ENCODE measurements at regions of chr10 and their contacts with region 1.

Region 1: GRCh38 chr10:5548527-5549223 is 23.9 kb downstream of the CALML3 start:
- DNase-seq: peak; percentile 84
- ATAC-seq: peak; percentile 93
- H3K4me3 Mint-ChIP-seq: no peak overlapping the region
- H3K27ac Mint-ChIP-seq: no peak overlapping the region
- H3K4me1 Mint-ChIP-seq: peaks cover 31% of the 10 kb centered on the region
- H3K27me3 Mint-ChIP-seq: no peaks in the 10 kb centered on the region
- CTCF ChIP-seq: no peak

Region 2: DNA sequence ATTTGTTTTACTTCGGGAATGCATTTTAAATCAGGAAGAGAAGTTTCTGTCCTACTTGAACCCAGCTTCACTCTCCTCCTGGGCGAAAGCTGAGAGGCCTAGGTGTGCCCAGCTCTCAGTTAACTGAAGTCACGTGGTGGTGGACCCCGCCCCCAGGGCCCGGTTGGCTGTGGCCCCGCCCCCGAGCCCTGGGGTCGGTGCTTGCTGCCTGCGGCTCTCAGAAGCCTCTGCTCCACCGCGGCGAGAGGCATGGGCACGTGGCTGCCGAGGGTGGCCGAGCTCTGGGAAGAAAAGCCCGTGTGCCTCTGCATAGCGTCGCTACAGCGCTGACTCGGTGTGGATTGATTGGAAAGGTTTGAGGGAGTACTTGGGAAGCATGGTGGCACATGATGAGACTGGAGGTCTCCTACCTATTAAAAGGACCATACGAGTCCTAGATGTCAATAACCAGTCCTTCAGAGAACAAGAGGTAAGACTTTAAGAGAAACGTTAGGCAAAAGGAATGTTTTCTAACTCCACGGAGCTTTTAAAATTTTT is 102.2 kb before region 1 on chr10:
- CTCF ChIA-PET with region 1: interaction called, 5 read pairs
- POLR2A ChIA-PET with region 1: interaction called, 4 read pairs
- intact Hi-C with region 1: loop called (anchors 5 kb)
- DNase-seq: peak; percentile 88
- ATAC-seq: peak; percentile 72
- H3K4me3 Mint-ChIP-seq: peak overlapping the region; percentile 79
- H3K27ac Mint-ChIP-seq: peak overlapping the region; percentile 75
- H3K4me1 Mint-ChIP-seq: peaks cover 49% of the 10 kb centered on the region
- H3K27me3 Mint-ChIP-seq: peaks cover 5% of the 10 kb centered on the region
- CTCF ChIP-seq: no peak

Region 3: GRCh38 chr10:5461914-5462840 is 86.5 kb before region 1 on chr10:
- CTCF ChIA-PET with region 1: no interaction called
- POLR2A ChIA-PET with region 1: no interaction called
- intact Hi-C with region 1: no loop called
- DNase-seq: no peak
- ATAC-seq: no peak
- H3K4me3 Mint-ChIP-seq: no peak overlapping the region
- H3K27ac Mint-ChIP-seq: no peak overlapping the region
- H3K4me1 Mint-ChIP-seq: peaks cover 6% of the 10 kb centered on the region
- H3K27me3 Mint-ChIP-seq: peaks cover 2% of the 10 kb centered on the region
- CTCF ChIP-seq: no peak

Region 4: GRCh38 chr10:5525561-5526341 is 22.9 kb before region 1 on chr10:
- CTCF ChIA-PET with region 1: no interaction called
- POLR2A ChIA-PET with region 1: no interaction called
- intact Hi-C with region 1: no loop called
- DNase-seq: no peak
- ATAC-seq: no peak
- H3K4me3 Mint-ChIP-seq: no peak overlapping the region
- H3K27ac Mint-ChIP-seq: no peak overlapping the region
- H3K4me1 Mint-ChIP-seq: no peaks in the 10 kb centered on the region
- H3K27me3 Mint-ChIP-seq: peaks cover 3% of the 10 kb centered on the region
- CTCF ChIP-seq: no peak